ENCODE measurements at regions of chr2 and their contacts with region 1.

Region 1: DNA sequence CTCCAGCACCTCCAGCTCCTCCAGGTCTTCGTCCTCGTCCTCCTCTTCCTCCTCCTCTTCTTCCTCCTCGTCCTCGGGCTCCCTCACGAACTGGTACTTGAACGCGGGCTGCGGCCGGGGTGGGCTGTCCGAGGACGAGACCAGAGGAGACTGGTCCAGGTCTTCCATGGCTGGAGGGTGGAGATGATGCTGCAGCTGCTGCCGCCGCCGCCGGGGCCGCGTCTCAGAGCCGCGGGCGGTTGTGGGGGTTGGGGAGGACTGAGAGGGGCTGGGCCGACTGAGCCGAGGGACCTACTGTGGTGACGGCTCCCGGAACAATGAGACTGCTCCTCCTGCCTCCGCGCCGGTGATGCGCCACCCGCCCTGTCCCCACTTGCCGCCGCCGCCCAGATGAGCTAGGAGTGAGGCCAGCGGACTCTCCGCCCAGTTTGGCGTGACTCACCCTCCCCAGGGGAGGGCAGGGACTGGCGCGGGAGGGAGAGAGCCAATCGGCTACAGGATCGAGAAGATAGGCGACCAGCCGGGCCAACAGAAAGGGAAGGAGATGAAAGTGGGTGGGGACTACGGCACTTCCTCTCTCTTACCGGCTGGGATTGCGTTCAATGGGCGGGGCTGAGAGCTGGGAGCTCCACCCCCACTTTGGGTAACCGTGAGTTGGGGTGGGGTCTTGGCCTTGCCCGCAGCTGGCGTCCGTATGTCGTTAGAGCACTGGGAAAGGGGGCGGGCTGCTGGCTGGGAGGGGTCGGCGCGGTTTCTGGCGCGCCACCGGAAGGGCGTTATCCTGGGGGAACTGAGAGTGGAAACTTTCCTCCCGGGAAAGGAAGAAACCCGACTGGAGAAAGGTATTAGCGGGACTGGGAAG is at the start of gene RTN4:
- DNase-seq: peak; percentile 100
- ATAC-seq: peak; percentile 92
- H3K4me3 Mint-ChIP-seq: peak within 1 kb of the TSS; percentile 93
- H3K27ac Mint-ChIP-seq: peak within 1 kb of the TSS; percentile 98
- H3K4me1 Mint-ChIP-seq: peaks cover 55% of the 10 kb centered on the region
- H3K27me3 Mint-ChIP-seq: no peaks in the 10 kb centered on the region
- total RNA-seq, gene RTN4: 71.6 to 88.0 TPM

Region 2: GRCh38 chr2:54977149-54977548 is 73.2 kb before region 1 on chr2:
- CTCF ChIA-PET with region 1: no interaction called
- DNase-seq: no peak
- ATAC-seq: no peak
- H3K4me3 Mint-ChIP-seq: no peak overlapping the region
- H3K27ac Mint-ChIP-seq: no peak overlapping the region
- H3K4me1 Mint-ChIP-seq: peaks cover 21% of the 10 kb centered on the region
- H3K27me3 Mint-ChIP-seq: no peaks in the 10 kb centered on the region

Region 3: DNA sequence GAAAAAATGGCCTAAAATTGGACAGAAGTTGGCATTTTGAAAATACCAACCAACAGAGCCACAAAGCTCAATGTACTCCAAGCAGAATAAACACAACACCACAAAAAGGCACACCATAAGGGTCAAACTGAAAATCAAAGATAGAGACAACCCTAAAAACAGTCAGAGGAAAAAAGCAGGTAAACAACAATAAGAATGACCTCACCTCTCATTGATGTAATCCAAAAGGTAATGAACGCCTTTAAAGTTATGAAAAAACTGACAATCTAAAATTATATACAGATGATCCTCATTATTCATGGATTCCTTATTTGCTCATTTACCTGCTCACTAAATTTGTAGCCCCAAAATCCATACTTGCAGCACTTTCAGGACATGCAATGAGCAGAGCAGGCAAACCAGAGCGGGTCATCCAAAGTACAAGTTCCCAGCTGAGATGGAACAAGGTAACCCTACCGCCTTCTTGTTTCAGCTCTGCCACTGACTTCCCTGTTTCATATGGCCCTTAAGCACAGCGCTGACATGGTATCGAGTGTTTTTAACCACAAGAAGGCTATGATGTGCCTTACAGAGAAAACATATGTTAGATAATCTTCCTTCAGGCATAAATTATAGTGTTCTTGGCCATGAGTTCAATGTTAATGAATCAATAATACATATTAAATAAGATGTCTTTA is 17.2 kb before region 1 on chr2:
- CTCF ChIA-PET with region 1: interaction called, 11 read pairs
- DNase-seq: no peak
- ATAC-seq: no peak
- H3K4me3 Mint-ChIP-seq: no peak overlapping the region
- H3K27ac Mint-ChIP-seq: no peak overlapping the region
- H3K4me1 Mint-ChIP-seq: peaks cover 18% of the 10 kb centered on the region
- H3K27me3 Mint-ChIP-seq: no peaks in the 10 kb centered on the region

Region 4: DNA sequence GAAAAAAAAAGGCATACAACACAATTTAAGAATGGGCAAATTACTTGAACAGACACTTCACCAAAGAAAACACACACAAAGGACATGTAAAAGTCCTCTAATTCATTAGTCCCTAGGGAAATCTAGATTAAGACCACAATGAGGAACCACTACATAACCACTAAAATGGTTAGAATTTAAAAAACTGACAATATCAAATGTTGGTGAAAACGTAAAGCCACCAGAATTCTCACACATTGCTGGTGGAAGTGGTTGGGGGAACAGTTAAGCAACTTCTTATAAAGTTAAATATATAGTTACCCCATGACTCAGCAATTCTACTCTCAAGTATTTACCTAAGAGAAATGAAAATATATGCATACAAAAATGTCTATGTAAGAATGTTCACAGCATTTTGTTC is 11.9 kb before region 1 on chr2:
- CTCF ChIA-PET with region 1: interaction called, 11 read pairs
- DNase-seq: no peak
- ATAC-seq: no peak
- H3K4me3 Mint-ChIP-seq: no peak overlapping the region
- H3K27ac Mint-ChIP-seq: peak overlapping the region; percentile 19
- H3K4me1 Mint-ChIP-seq: peaks cover 29% of the 10 kb centered on the region
- H3K27me3 Mint-ChIP-seq: no peaks in the 10 kb centered on the region